ENCODE measurements at regions of chr11 and their contacts with region 1.

Region 1: DNA sequence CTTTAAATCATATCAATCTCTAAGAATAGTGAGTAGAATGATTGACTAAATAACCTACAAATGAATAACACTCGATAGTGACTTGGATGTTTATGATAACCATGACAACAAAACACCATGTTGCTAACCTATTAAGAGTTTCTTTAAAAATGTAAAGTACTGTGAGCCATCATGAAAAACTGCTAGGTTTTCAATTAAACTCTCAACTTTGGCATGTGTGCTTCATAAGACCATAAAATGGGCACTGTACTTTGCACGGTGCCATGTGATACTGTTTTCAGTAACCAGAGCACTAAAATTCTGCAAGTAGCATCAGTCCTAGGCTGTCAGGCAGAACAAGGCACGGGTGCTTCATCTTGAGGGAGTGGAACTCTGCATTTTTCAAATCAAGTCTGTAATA is 96.2 kb upstream of the TRIM77 start:
- DNase-seq: no peak
- ATAC-seq: no peak
- H3K4me3 ChIP-seq: no peak overlapping the region
- H3K27ac ChIP-seq: no peak overlapping the region
- H3K4me1 ChIP-seq: peaks cover 0 to 21% (median 0%) of the 10 kb centered on the region in 12 donors
- H3K27me3 ChIP-seq: peaks cover 0 to 3% (median 0%) of the 10 kb centered on the region in 9 donors
- CTCF ChIP-seq: no peak
- POLR2A ChIP-seq: no peak

Region 2: DNA sequence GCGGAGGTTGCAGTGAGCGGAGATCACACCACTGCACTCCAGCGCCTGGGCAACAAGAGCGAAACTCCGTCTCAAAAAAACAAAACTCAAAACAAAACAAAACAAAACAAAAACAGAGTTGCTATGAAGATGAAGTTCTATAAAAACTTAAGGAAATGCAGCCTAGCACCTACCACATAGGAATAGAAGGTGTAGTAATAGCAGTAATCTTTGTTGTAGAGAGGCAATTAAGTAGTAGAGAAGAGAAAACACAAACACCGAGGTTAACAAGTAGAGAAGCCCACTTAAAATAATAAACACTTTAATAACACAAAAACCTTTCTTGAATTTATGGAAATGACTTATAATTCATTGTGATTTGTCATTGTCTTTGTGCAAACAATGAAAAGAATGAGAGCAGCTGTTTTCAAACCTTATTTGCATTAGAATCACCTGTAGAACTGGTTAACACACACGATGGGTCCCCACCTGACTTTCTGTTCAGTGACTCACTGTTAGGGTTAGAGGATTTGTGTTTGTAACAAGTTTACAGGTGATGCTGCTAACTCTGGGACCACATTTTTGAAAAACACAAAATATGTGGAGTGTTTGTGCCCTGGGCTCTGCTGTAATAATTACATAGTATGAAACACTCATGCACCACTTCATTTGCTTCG is 393.1 kb before region 1 on chr11:
- intact Hi-C with region 1: no loop called
- DNase-seq: no peak
- ATAC-seq: no peak
- H3K4me3 ChIP-seq: no peak overlapping the region
- H3K27ac ChIP-seq: no peak overlapping the region
- H3K4me1 ChIP-seq: no peaks in the 10 kb centered on the region
- H3K27me3 ChIP-seq: no peaks in the 10 kb centered on the region
- CTCF ChIP-seq: no peak
- POLR2A ChIP-seq: no peak

Region 3: DNA sequence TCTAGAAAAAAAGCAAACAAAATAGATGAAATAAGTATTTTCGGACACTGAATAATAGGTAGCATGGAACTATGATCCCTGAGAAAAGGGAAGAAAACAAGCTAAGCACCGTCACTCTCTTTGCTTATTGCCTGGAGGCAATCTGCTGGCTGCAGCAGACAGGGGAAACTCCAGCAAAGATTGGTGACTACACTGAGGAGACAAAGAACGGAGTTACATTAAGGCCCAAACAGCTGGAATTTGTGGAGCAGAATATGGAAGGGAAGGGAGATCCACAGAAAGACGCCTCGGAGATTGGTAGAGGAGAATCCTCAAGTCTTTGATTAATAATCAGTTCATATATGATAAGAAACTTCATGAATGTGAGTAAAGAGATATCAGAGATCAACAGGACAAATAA is 286.0 kb before region 1 on chr11:
- intact Hi-C with region 1: loop called in 7 of 10 experiments (anchors 10 kb)
- DNase-seq: no peak
- ATAC-seq: no peak
- H3K4me3 ChIP-seq: no peak overlapping the region
- H3K27ac ChIP-seq: no peak overlapping the region
- H3K4me1 ChIP-seq: no peaks in the 10 kb centered on the region
- H3K27me3 ChIP-seq: no peaks in the 10 kb centered on the region
- CTCF ChIP-seq: no peak
- POLR2A ChIP-seq: no peak

Region 4: DNA sequence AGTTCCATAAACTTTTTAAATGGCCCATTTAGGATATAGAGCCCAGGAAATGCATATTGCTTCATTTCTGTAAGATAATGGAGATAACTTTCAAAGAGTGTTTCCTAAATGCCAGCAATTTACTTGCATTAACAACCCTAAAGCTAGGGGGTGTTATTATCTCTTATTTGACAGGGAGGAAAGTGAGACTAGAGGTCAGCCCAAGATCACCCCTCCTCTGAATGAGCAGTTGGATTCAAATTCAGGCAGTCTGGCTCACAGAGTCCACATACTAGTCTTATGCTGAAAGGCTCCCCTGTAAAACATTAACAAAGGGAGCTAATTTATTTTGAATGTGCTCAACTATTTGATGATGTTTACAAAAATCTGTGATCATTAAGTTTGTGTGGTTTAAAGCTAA is 46.3 kb after region 1 on chr11:
- intact Hi-C with region 1: no loop called
- DNase-seq: no peak
- ATAC-seq: no peak
- H3K4me3 ChIP-seq: no peak overlapping the region
- H3K27ac ChIP-seq: no peak overlapping the region
- H3K4me1 ChIP-seq: no peaks in the 10 kb centered on the region
- H3K27me3 ChIP-seq: no peaks in the 10 kb centered on the region
- CTCF ChIP-seq: no peak
- POLR2A ChIP-seq: no peak

Region 5: DNA sequence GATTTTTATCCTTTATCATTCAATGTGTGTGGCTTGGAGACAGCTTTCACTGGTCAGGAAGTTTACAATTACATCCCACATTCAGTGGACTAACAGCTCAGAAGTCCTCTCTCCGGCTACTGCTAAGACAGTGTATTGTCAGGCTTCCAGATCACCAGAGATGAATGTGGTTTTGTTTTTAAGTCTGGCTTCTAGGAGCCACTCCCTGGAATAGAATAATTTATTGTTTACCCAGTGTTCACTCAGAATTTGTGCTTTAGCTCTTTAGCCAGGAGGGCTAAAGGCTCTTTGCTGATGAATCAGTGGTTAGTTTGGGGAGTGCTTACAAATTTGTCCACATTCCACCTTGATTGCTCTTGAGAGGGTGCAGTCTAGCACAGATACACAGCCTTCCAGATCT is 122.7 kb after region 1 on chr11:
- intact Hi-C with region 1: no loop called
- DNase-seq: no peak
- ATAC-seq: no peak
- H3K4me3 ChIP-seq: no peak overlapping the region
- H3K27ac ChIP-seq: no peak overlapping the region
- H3K4me1 ChIP-seq: no peaks in the 10 kb centered on the region
- H3K27me3 ChIP-seq: no peaks in the 10 kb centered on the region
- CTCF ChIP-seq: no peak
- POLR2A ChIP-seq: no peak

Measured in heart left ventricle (tissue), 16 donors.